ENCODE measurements at regions of chr12 and their contacts with region 1.

Region 1: GRCh38 chr12:56636675-56637540 is 6.8 kb upstream of the BAZ2A start:
- DNase-seq: peak; percentile 99 to 100 (median 99)
- H3K4me3 ChIP-seq: peak overlapping the region; percentile 44 to 95 (median 84)
- H3K27ac ChIP-seq: peak overlapping the region; percentile 81 to 89
- H3K4me1 ChIP-seq: peaks cover 13 to 61% (median 48%) of the 10 kb centered on the region in 4 experiments
- H3K27me3 ChIP-seq: no peaks in the 10 kb centered on the region

Region 2: DNA sequence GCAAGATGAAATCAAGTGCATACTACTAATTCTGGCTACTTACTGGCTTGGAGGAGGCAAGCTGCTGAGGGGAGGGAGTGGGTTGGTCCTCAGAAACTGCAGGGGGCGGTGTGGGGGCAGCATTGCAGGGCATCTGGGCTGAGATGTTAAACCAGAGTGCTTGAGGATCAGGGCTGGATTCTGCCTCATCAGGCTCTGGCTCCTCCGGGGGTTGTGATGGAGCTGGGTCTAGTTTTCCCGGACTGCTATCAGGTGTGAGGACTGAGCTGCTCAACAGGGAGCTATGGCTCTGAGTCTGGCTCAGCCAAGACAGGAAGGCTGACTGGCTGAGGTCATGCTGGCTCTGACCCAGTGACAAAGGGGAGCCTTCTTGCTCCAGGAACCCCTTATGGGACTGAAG is 35.4 kb before region 1 on chr12:
- CTCF ChIA-PET with region 1: interaction called, 316 read pairs
- POLR2A ChIA-PET with region 1: no interaction called
- DNase-seq: peak in 2 of 3 donors; percentile 59 to 61
- H3K4me3 ChIP-seq: no peak overlapping the region
- H3K27ac ChIP-seq: no peak overlapping the region
- H3K4me1 ChIP-seq: no peaks in the 10 kb centered on the region
- H3K27me3 ChIP-seq: no peaks in the 10 kb centered on the region

Region 3: DNA sequence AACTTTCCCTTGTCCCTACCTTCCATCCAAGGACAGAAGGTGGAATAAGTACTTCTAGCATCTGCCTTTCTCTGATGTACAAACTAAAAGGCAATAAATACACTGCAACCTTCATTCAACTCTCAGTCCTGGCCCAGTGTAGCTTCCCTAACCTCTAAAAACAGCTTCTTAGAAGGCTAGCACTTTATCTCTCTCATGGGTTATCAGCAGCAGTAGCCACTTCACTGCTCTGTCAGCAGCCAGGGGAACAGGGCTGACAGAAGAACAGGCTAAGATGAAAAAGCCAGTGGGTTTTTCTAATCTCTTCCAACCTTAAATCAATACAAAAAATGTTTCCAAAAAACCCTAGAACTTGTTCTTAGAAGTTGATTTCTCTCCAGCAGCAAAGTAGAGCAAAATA is 20.0 kb before region 1 on chr12:
- CTCF ChIA-PET with region 1: interaction called, 316 read pairs
- POLR2A ChIA-PET with region 1: interaction called, 3 read pairs
- DNase-seq: no peak
- H3K4me3 ChIP-seq: no peak overlapping the region
- H3K27ac ChIP-seq: no peak overlapping the region
- H3K4me1 ChIP-seq: no peaks in the 10 kb centered on the region
- H3K27me3 ChIP-seq: no peaks in the 10 kb centered on the region

Region 4: GRCh38 chr12:56622535-56622934 is 14.4 kb before region 1 on chr12:
- CTCF ChIA-PET with region 1: interaction called, 29 read pairs
- POLR2A ChIA-PET with region 1: interaction called, 6 read pairs
- DNase-seq: no peak
- H3K4me3 ChIP-seq: no peak overlapping the region
- H3K27ac ChIP-seq: peak overlapping the region in 1 of 2 experiments; percentile 43
- H3K4me1 ChIP-seq: peaks cover 5 to 19% (median 12%) of the 10 kb centered on the region in 4 experiments
- H3K27me3 ChIP-seq: no peaks in the 10 kb centered on the region

Region 5: GRCh38 chr12:56836317-56836716 is 199.4 kb after region 1 on chr12:
- CTCF ChIA-PET with region 1: no interaction called
- POLR2A ChIA-PET with region 1: no interaction called
- DNase-seq: peak in 2 of 3 donors; percentile 9 to 15
- H3K4me3 ChIP-seq: no peak overlapping the region
- H3K27ac ChIP-seq: no peak overlapping the region
- H3K4me1 ChIP-seq: peaks cover 0 to 7% (median 0%) of the 10 kb centered on the region in 4 experiments
- H3K27me3 ChIP-seq: peaks cover 0 to 7% (median 0%) of the 10 kb centered on the region in 5 experiments

Region 6: DNA sequence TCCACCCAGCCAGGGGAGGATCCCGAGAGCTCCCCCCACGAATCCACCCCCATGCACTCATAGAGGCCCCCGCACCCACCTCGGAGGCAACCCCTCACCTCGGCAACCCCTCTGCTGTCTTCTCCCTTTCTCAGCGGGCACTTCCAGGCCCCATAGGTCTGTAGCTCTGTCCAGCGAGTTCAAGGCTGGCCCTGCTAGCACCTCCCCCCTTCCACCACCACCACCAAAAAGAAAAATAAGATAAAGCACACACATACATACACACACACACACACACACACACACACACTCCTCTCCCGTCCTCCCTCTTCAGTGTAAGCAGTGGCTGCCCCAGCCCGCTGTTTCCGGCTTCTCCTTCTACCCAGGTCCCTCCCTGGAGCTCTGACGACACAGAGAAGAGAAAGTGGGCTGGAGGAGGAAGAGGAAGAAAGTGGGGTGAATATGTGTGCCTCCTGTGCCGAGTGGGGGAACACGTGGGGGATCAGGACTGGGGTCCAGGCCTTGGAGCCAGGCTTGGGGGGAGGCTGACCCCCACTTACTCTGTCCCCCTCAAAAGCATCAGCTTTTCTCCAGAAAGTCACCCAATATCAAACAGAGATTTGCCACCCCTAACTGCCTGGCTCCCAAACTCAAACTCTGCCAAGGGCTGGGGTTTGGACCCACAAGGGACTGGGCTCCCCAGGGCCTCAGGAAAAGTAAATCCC is 474.3 kb after region 1 on chr12 and contains the start of gene STAT6:
- CTCF ChIA-PET with region 1: no interaction called
- POLR2A ChIA-PET with region 1: no interaction called
- DNase-seq: peak; percentile 92 to 96 (median 94)
- H3K4me3 ChIP-seq: peak within 1 kb of the TSS; percentile 72 to 98 (median 90)
- H3K27ac ChIP-seq: peak within 1 kb of the TSS; percentile 85 to 95
- H3K4me1 ChIP-seq: peaks cover 6 to 37% (median 30%) of the 10 kb centered on the region in 4 experiments
- H3K27me3 ChIP-seq: no peaks in the 10 kb centered on the region

Measured in common myeloid progenitor, CD34-positive (primary cell).